Psoas muscle (tissue), 8 donors: ENCODE measurements at regions of chr22 and their contacts with region 1.

Region 1: GRCh38 chr22:36042240-36042639 is 13.6 kb upstream of the RBFOX2 start:
- DNase-seq: no peak
- ATAC-seq: no peak
- H3K4me3 ChIP-seq: no peak overlapping the region
- H3K27ac ChIP-seq: no peak overlapping the region
- H3K4me1 ChIP-seq: no peaks in the 10 kb centered on the region
- H3K27me3 ChIP-seq: no peaks in the 10 kb centered on the region
- CTCF ChIP-seq: no peak

Region 2: GRCh38 chr22:35642305-35642741 is 399.9 kb before region 1 on chr22:
- intact Hi-C with region 1: loop called in 1 of 2 experiments (anchors 5 kb)
- DNase-seq: peak in 1 of 2 donors; percentile 55
- ATAC-seq: no peak
- H3K4me3 ChIP-seq: no peak overlapping the region
- H3K27ac ChIP-seq: no peak overlapping the region
- H3K4me1 ChIP-seq: peaks cover 28% of the 10 kb centered on the region
- H3K27me3 ChIP-seq: no peaks in the 10 kb centered on the region
- CTCF ChIP-seq: no peak

Region 3: DNA sequence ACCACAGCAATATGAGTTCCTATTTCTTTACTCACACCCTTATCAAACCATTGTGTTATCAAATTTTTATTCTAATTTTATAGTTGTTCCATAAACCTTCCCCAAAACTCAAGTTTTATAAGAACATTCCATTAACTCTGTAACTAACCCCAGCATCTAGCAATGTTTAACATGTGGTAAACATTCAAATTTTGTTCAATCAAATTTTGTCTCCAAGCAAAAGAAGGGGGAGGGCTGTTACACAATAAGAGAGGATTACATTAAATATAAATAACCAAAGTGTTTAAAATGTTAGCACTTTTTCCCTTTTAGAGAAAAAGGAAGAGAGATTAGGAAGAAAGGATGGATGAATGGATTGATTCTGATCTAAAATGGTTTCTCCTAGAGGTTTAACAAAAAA is 34.1 kb before region 1 on chr22:
- intact Hi-C with region 1: no loop called
- DNase-seq: no peak
- ATAC-seq: no peak
- H3K4me3 ChIP-seq: no peak overlapping the region
- H3K27ac ChIP-seq: no peak overlapping the region
- H3K4me1 ChIP-seq: peaks cover 14% of the 10 kb centered on the region
- H3K27me3 ChIP-seq: no peaks in the 10 kb centered on the region
- CTCF ChIP-seq: no peak